WTC11 (cell line): ENCODE measurements at regions of chr2 and their contacts with region 1.

Region 1: GRCh38 chr2:163625632-163626031 is 110.2 kb downstream of the FIGN start:
- DNase-seq: no peak
- ATAC-seq: no peak
- H3K4me3 Mint-ChIP-seq: no peak overlapping the region
- H3K27ac Mint-ChIP-seq: no peak overlapping the region
- H3K4me1 Mint-ChIP-seq: peaks cover 29% of the 10 kb centered on the region
- H3K27me3 Mint-ChIP-seq: no peaks in the 10 kb centered on the region
- CTCF ChIP-seq: no peak

Region 2: DNA sequence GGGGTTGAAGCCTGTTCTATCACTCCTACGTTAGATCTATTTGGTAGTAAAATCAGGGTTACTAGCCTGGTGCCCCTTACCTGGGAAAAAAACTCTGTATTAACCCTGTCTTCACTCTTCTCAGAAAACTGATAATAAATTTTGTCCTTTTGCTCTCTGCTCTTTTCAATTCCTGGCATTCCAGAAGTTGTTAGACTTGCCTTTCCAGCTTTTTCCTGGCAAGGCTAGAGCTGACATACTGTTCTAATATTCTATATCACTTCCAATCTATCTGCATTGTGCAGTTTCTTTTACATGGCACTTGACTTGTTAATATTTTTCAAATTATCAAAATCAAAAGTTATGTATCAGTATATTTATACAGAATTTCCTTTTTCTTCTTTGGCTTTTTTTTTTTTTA is 52.0 kb before region 1 on chr2:
- CTCF ChIA-PET with region 1: no interaction called
- POLR2A ChIA-PET with region 1: no interaction called
- DNase-seq: no peak
- ATAC-seq: no peak
- H3K4me3 Mint-ChIP-seq: no peak overlapping the region
- H3K27ac Mint-ChIP-seq: no peak overlapping the region
- H3K4me1 Mint-ChIP-seq: no peaks in the 10 kb centered on the region
- H3K27me3 Mint-ChIP-seq: no peaks in the 10 kb centered on the region
- CTCF ChIP-seq: no peak

Region 3: DNA sequence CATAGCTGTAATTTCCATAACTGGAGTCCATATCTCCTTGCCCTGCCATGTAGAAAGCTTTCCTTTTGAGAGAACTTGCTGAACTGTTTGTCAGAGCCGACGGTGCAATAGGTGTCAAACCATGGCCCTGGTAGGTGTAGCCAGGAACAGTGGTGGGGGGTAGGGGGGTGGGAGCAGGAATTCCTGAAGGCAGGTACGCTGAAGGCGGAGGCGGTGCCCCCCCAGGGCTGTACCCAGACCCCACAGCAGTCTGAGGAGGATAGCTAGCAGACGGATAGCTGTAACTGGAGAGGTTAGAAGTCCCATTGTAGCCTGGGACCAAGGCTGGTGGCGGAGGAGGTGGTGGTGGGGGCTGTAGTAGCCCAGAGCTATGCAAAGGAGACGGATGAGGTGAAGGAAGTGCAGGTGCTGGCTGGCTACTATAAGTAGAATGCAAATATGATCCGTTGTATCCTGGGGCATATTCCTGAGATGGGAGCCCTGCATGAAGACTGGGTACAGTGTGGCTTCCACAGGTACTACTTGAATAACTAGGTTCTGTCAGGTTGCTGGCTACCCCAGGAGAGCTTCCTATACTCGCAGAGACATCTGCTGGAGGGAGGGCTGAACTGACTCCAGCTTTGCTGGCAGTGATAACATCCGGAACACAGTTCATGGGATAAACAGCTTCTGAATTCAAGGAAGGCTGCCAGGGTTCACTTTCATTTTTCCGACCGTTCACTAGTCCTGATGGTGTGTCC is 14.6 kb before region 1 on chr2:
- CTCF ChIA-PET with region 1: interaction called, 10 read pairs
- POLR2A ChIA-PET with region 1: no interaction called
- DNase-seq: peak; percentile 53
- ATAC-seq: peak; percentile 92
- H3K4me3 Mint-ChIP-seq: no peak overlapping the region
- H3K27ac Mint-ChIP-seq: peak overlapping the region; percentile 41; the same call in 1 of the 2 replicates
- H3K4me1 Mint-ChIP-seq: peaks cover 18% of the 10 kb centered on the region
- H3K27me3 Mint-ChIP-seq: no peaks in the 10 kb centered on the region
- CTCF ChIP-seq: no peak